CD4-positive, alpha-beta T cell (primary cell): ENCODE measurements at regions of chr9 and their contacts with region 1.

Region 1: GRCh38 chr9:128310461-128310860 is 11.8 kb downstream of the TRUB2 start:
- DNase-seq: no peak
- ATAC-seq: no peak
- H3K4me3 ChIP-seq: no peak overlapping the region
- H3K4me3 Mint-ChIP-seq: no peak overlapping the region
- H3K27ac ChIP-seq: no peak overlapping the region
- H3K27ac Mint-ChIP-seq: no peak overlapping the region
- H3K4me1 ChIP-seq: no peaks in the 10 kb centered on the region
- H3K4me1 Mint-ChIP-seq: no peaks in the 10 kb centered on the region
- H3K27me3 ChIP-seq: no peaks in the 10 kb centered on the region
- H3K27me3 Mint-ChIP-seq: no peaks in the 10 kb centered on the region
- CTCF ChIP-seq: no peak

Region 2: DNA sequence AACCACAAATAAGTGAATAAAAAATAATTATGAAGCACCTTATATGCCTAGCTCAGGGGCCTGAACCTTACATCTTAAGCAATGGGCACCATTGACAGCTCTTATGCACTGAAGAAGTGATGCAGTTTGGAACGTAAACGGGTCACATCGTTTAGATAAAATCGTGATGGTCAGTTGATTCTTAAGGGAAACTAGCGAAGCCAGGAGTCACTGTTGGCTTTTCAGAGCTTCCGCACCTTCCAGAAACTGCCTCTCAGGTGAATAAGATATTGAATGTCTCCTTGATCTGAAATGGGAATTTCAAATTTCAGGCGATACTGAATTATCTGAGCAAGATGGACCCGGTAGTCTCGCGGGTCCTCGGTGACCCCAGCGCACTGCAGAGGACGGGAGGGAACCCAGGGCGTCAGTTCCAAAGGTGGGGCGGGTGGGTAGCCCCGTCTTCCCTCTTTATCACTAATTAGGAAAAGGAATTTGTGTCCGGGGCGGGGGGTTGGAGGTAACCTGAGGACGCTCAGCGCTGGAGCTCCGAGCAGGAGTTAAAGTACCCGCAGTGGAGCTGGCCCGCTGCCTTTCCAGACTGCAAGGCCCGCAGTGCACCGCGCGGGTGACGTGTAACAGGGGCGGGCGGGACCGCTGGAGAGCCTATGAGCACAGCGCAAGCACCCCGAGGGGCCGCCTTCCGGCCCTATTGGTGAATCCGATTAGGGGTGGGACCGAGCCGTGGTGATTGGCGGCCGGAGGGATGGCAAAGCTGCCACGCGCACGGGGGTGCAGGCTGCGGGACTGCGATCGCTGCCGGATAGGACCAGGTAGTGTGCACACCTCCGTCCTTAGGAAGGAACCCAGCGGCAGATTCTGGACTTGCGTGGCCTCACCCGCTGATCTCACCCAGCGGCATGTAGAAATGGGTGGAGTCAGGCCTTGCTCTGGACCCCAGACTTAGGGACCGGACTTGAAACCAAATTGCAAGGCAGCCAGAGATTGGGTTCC is 1065.6 kb before region 1 on chr9:
- CTCF ChIA-PET with region 1: no interaction called
- POLR2A ChIA-PET with region 1: no interaction called
- intact Hi-C with region 1: no loop called
- DNase-seq: peak; percentile 86 to 96 (median 94)
- ATAC-seq: peak; percentile 100
- H3K4me3 ChIP-seq: peak overlapping the region; percentile 56
- H3K4me3 Mint-ChIP-seq: peak overlapping the region; percentile 81
- H3K27ac ChIP-seq: no peak overlapping the region
- H3K27ac Mint-ChIP-seq: no peak overlapping the region
- H3K4me1 ChIP-seq: peaks cover 13% of the 10 kb centered on the region
- H3K4me1 Mint-ChIP-seq: peaks cover 12% of the 10 kb centered on the region
- H3K27me3 ChIP-seq: no peaks in the 10 kb centered on the region
- H3K27me3 Mint-ChIP-seq: peaks cover 20% of the 10 kb centered on the region
- CTCF ChIP-seq: no peak

Region 3: DNA sequence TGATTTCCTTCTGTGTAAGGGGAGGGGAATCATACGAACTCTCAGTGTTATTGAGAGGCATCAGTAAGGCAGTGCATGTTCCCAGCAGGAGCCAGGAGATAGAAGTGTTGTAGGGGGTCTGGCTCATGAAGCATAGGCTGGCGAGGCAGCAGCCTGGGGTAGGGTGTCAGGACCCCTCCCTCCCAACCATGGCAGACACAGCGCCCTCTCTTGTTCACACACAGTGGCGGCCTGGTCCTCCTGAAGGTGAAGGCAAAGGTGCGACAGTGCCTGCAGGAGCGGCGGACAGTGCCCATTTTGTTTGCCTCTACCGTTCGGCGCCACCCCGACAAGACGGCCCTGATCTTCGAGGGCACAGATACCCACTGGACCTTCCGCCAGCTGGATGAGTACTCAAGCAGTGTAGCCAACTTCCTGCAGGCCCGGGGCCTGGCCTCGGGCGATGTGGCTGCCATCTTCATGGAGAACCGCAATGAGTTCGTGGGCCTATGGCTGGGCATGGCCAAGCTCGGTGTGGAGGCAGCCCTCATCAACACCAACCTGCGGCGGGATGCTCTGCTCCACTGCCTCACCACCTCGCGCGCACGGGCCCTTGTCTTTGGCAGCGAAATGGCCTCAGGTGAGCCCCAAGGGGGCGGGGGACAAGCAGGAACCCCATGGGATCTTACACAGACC is 34.6 kb after region 1 on chr9:
- CTCF ChIA-PET with region 1: no interaction called
- POLR2A ChIA-PET with region 1: no interaction called
- intact Hi-C with region 1: loop called in 1 of 2 experiments (anchors 5 kb)
- DNase-seq: no peak
- ATAC-seq: no peak
- H3K4me3 ChIP-seq: no peak overlapping the region
- H3K4me3 Mint-ChIP-seq: no peak overlapping the region
- H3K27ac ChIP-seq: no peak overlapping the region
- H3K27ac Mint-ChIP-seq: no peak overlapping the region
- H3K4me1 ChIP-seq: peaks cover 15% of the 10 kb centered on the region
- H3K4me1 Mint-ChIP-seq: peaks cover 7% of the 10 kb centered on the region
- H3K27me3 ChIP-seq: no peaks in the 10 kb centered on the region
- H3K27me3 Mint-ChIP-seq: no peaks in the 10 kb centered on the region
- CTCF ChIP-seq: no peak